ENCODE measurements at regions of chr4 and their contacts with region 1.

Region 1: GRCh38 chr4:173357939-173358338 is 12.8 kb upstream of the SAP30 start:
- DNase-seq: no peak
- H3K4me3 Mint-ChIP-seq: no peak overlapping the region
- H3K27ac Mint-ChIP-seq: no peak overlapping the region
- H3K4me1 Mint-ChIP-seq: no peaks in the 10 kb centered on the region
- H3K27me3 Mint-ChIP-seq: no peaks in the 10 kb centered on the region
- CTCF ChIP-seq: no peak

Region 2: DNA sequence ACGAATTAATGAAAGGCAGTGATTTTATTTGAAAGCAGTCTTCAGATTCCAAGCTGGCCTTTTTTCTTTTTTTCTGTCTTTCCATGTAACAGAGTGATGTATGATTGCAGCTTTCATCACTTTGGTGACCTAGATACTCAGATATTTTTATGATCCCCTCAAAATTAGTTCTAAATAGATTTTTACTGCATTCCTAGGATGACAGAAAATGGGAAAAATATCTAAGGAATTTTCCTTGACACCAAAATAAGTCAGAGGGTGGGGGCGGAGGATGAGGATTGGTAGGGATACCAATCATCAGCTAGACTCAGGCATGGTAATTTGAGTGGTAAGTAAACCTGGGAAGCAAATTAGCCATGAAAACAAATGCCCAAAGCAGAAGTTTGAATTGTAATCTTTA is 11.9 kb before region 1 on chr4:
- CTCF ChIA-PET with region 1: no interaction called
- intact Hi-C with region 1: no loop called
- DNase-seq: no peak
- H3K4me3 Mint-ChIP-seq: no peak overlapping the region
- H3K27ac Mint-ChIP-seq: no peak overlapping the region
- H3K4me1 Mint-ChIP-seq: no peaks in the 10 kb centered on the region
- H3K27me3 Mint-ChIP-seq: no peaks in the 10 kb centered on the region
- CTCF ChIP-seq: no peak

Region 3: DNA sequence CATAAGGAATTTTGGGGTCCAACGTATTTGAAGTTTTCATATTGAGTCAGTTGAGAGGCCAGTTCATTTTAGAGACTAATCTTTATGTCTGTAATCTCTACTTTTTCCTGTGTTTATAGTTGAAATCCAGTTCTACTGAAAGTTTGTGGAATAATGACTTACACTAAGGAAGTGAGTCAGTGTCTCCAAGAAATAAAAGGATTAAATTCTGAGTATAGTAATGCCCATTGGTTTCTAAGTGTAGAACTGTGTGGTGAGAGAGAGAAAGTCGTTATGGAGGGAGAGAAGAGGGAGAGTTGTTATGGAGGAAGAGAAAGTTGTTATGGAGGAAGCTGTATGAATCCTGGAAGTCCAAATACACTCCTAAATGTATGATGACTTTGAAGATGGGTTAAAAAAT is 436.7 kb after region 1 on chr4:
- CTCF ChIA-PET with region 1: no interaction called
- intact Hi-C with region 1: no loop called
- DNase-seq: no peak
- H3K4me3 Mint-ChIP-seq: no peak overlapping the region
- H3K27ac Mint-ChIP-seq: no peak overlapping the region
- H3K4me1 Mint-ChIP-seq: no peaks in the 10 kb centered on the region
- H3K27me3 Mint-ChIP-seq: no peaks in the 10 kb centered on the region
- CTCF ChIP-seq: no peak

Region 4: GRCh38 chr4:175017751-175018150 is 1659.8 kb after region 1 on chr4:
- CTCF ChIA-PET with region 1: interaction called, 14 read pairs
- intact Hi-C with region 1: no loop called
- DNase-seq: no peak
- H3K4me3 Mint-ChIP-seq: no peak overlapping the region
- H3K27ac Mint-ChIP-seq: no peak overlapping the region
- H3K4me1 Mint-ChIP-seq: no peaks in the 10 kb centered on the region
- H3K27me3 Mint-ChIP-seq: no peaks in the 10 kb centered on the region
- CTCF ChIP-seq: no peak

Measured in Calu3 (cell line).